Activated T-helper 1 cell treated with anti-CD3 and anti-CD28 coated beads, Interleukin-12 subunit alpha, Interleukin-12 subunit beta, Interleukin-2, Interleukin-4 antibody, amounts not matched to agents 30 ng/mL and 10 ng/mL and 1 ng/mL, durations not matched to agents 14 hours and 24 hours and 36 hours (primary cell): ENCODE measurements at regions of chr10 and their contacts with region 1.

Region 1: DNA sequence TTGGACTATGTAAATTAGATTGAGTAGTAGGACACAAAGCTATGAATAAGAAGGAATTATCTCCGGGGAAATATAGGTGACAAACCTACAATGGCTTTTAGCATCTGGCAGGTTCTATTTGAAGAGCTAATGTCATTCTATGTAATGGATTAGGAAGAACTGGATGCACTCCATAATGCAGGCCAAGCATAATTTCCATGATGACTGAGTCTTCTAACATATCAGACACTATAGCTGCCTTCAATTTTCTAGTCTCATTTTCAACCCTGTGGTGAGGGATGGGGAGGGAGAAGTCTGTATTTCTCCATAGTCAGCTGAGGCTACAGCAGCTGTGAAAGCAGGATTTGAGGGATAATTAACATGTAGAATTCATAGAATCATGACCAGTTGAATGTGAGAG is 390.4 kb upstream of the LRRTM3 start:
- DNase-seq: no peak
- H3K4me3 Mint-ChIP-seq: no peak overlapping the region
- H3K27ac Mint-ChIP-seq: no peak overlapping the region
- H3K4me1 Mint-ChIP-seq: no peaks in the 10 kb centered on the region
- H3K27me3 Mint-ChIP-seq: no peaks in the 10 kb centered on the region

Region 2: GRCh38 chr10:66209025-66209424 is 326.4 kb before region 1 on chr10:
- intact Hi-C with region 1: no loop called
- DNase-seq: no peak
- H3K4me3 Mint-ChIP-seq: no peak overlapping the region
- H3K27ac Mint-ChIP-seq: no peak overlapping the region
- H3K4me1 Mint-ChIP-seq: no peaks in the 10 kb centered on the region
- H3K27me3 Mint-ChIP-seq: no peaks in the 10 kb centered on the region

Region 3: GRCh38 chr10:66472156-66472555 is 63.3 kb before region 1 on chr10:
- intact Hi-C with region 1: no loop called
- DNase-seq: no peak
- H3K4me3 Mint-ChIP-seq: no peak overlapping the region
- H3K27ac Mint-ChIP-seq: no peak overlapping the region
- H3K4me1 Mint-ChIP-seq: no peaks in the 10 kb centered on the region
- H3K27me3 Mint-ChIP-seq: no peaks in the 10 kb centered on the region

Region 4: DNA sequence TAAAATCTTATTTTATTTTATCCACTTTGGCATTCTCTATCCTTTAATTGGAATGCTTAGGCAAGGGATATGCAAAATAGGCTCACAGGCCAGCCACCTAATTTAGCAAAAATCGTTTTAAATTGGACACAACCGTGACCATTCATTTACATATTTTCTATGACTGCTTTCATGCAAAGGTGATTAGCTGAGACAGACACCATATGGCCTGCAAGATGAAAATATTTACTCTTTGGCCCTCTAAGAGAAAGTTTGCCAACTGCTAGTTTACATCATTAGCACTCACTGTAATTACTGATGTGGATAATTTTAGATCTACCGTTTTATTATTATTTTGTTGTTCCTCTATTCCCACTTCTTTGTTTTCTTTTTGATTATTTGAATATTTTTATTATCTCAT is 14.9 kb after region 1 on chr10:
- intact Hi-C with region 1: loop called (anchors 2 kb)
- DNase-seq: no peak
- H3K4me3 Mint-ChIP-seq: no peak overlapping the region
- H3K27ac Mint-ChIP-seq: no peak overlapping the region
- H3K4me1 Mint-ChIP-seq: no peaks in the 10 kb centered on the region
- H3K27me3 Mint-ChIP-seq: no peaks in the 10 kb centered on the region